ENCODE measurements at regions of chr17 and their contacts with region 1.

Region 1: GRCh38 chr17:50026901-50027630 is 28.8 kb upstream of the ITGA3 start:
- DNase-seq: peak; percentile 90
- CTCF ChIP-seq: peak; percentile 92

Region 2: DNA sequence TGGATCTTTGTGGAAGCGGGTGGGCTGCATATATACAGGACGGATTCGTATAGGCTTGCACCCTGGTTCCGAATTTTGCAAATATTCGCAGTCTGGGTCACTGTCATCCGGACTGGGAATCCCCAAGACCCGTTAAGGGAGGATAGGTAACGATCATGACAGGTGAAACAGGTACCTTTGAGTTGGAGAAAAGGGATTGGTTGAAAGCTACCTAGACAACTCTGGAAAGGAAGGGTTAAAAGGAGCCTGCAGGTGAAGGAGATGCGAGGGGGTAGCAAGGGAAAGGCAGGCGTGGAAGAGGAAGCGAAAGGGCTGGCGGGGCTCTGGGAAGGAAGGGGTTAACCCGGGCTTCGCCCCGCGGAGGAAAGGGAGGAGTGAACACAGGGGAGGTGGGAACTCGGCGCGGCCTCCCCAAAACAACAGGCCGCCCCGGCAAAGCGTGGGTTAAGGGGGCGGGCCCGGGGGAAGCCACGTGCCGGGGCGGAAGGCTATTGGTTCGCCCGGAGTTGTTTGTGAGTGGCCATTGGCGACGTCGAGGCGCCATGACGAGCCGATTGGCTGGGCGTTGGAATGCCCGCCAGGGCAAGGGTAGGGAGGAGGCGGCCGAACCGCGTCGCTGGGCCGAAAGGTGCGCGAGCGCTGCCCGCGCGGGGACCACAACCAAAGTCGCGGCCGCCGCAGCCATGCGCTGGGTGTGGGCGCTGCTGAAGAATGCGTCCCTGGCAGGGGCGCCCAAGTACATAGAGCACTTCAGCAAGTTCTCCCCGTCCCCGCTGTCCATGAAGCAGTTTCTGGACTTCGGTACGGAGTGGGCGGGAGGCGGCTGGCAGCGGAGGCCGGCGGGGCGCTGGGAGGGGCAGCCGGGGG is 67.9 kb after region 1 on chr17 and contains the start of gene PDK2:
- in situ Hi-C with region 1: loop called (anchors 5 kb)
- DNase-seq: peak; percentile 99
- CTCF ChIP-seq: no peak

Region 3: DNA sequence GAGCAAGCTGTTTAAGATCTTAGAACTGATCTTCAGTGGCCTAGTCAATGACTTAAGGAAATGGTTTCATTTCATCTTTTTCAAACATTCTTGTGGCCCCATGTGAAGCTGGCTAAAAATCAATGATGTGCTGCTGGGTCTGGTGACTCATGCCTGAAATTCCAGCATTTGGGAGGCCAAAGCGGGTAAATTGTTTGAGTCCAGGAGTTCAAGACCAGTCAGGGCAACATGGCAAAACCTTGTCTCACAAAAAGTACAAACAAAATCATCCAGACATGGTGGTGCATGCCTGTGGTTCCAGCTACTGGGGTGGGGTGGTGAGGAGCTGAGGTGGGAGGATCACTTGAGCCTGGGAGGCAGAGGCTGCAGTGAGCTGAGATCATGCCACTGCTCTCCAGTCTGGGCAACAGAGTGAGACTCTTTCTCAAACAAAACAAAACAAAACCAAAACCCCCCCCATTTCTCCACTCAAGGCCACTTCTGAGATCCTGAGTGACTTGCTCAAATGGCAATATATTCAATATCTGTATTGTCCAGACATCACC is 191.8 kb after region 1 on chr17:
- in situ Hi-C with region 1: no loop called
- DNase-seq: peak; percentile 37
- CTCF ChIP-seq: no peak

Measured in GM13976 (cell line).